ENCODE measurements at regions of chr2 and their contacts with region 1.

Region 1: DNA sequence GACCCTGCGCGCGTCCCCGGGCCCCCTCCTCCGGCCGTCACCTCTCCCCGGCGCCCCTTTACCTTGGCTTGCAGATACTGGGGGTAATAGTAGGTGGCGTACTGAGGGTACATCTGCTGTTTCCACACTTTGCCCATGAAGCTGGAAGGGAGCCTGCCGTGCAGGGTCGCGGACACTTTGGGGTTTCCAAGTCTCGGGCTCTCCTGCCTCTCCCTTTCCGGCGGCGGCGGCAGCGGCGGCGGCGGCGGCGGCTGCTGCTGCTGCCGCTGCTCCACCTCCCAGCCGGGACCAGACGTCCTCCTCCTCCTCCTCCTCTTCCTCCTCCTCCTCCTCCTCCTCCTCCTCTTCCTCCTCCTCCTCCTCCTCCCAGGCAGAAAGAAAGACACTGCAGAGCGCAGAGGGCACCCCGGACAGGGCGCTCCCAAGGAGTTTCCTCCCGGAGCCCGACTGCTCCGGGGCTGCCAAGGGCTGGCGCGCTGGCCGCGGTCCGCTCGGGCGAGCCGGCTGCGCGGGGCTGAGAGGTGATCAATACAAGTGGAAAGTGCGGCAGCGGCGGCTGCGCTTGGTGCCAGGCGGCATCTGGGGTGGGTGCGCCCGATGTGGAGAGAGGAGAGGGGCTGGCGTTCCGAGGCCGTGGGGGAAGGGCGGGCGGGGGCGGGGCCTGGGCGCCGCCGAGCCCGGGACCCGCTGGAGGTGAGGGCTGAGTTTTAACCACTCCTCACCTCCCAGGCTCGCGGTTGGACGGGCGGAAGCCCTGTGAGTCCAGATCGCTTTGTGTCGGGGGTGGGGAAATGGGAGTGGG is at the start of gene RBMS1:
- DNase-seq: peak; percentile 57 to 68
- H3K4me3 ChIP-seq: peak within 1 kb of the TSS; percentile 94
- H3K4me3 Mint-ChIP-seq: peak within 1 kb of the TSS; percentile 91
- H3K27ac Mint-ChIP-seq: peak within 1 kb of the TSS; percentile 64
- H3K4me1 ChIP-seq: peaks cover 12% of the 10 kb centered on the region
- H3K4me1 Mint-ChIP-seq: peaks cover 10% of the 10 kb centered on the region
- H3K27me3 ChIP-seq: no peaks in the 10 kb centered on the region
- H3K27me3 Mint-ChIP-seq: peaks cover 3% of the 10 kb centered on the region
- CTCF ChIP-seq: no peak
- total RNA-seq, gene RBMS1: 91.9 and 92.2 TPM in 2 replicates

Region 2: DNA sequence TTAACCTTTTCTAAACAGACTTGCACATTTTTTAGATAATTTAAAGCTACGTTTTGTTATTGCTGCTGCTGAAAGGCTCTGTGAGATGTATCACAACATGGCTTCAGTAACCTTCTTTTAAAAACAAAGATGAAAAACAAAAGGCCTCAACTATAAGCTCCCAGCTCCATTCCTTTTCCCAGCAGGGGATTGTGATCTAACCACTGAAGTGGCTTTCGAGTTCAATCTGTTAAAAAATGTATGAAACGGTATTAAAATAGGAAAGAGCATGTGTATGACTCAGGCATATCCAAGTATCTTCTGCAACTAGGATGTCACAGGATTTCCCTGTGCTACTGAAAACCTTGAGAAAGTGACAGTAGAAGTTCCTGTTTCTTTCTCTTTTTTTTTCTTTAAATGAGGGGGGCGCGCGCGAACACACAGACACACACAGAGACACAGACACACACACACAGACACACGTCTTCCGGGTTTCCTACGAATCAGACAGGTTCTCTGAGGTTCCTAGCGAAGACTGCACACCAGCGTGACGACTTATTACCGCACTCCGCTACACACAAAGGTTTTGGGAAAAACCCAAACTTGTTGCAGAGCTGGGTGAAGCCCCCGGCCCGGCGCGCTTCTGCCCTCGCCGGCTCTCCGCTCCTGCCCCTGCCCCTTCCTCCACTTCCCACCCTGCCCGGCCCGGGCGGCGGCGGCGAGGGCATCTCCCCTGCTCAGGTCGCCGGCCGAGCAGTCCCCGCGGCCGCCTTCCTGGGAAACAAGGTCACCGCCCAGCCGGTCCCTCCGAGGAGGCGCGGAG is 86.6 kb before region 1 on chr2:
- CTCF ChIA-PET with region 1: no interaction called
- POLR2A ChIA-PET with region 1: no interaction called
- intact Hi-C with region 1: loop called (anchors 1 kb)
- DNase-seq: peak; percentile 57
- H3K4me3 ChIP-seq: peak overlapping the region; percentile 90
- H3K4me3 Mint-ChIP-seq: peak overlapping the region; percentile 75
- H3K27ac Mint-ChIP-seq: peak overlapping the region; percentile 95
- H3K4me1 ChIP-seq: peaks cover 38% of the 10 kb centered on the region
- H3K4me1 Mint-ChIP-seq: peaks cover 48% of the 10 kb centered on the region
- H3K27me3 ChIP-seq: no peaks in the 10 kb centered on the region
- H3K27me3 Mint-ChIP-seq: no peaks in the 10 kb centered on the region
- CTCF ChIP-seq: no peak

Region 3: GRCh38 chr2:160429248-160430000 is 64.0 kb before region 1 on chr2:
- CTCF ChIA-PET with region 1: no interaction called
- POLR2A ChIA-PET with region 1: no interaction called
- intact Hi-C with region 1: loop called (anchors 2 kb)
- DNase-seq: peak in 1 of 2 experiments; percentile 18
- H3K4me3 ChIP-seq: no peak overlapping the region
- H3K4me3 Mint-ChIP-seq: no peak overlapping the region
- H3K27ac Mint-ChIP-seq: no peak overlapping the region
- H3K4me1 ChIP-seq: peaks cover 16% of the 10 kb centered on the region
- H3K4me1 Mint-ChIP-seq: peaks cover 17% of the 10 kb centered on the region
- H3K27me3 ChIP-seq: no peaks in the 10 kb centered on the region
- H3K27me3 Mint-ChIP-seq: no peaks in the 10 kb centered on the region
- CTCF ChIP-seq: peak; percentile 43 to 48

Region 4: GRCh38 chr2:160582490-160583145 is 89.2 kb after region 1 on chr2:
- CTCF ChIA-PET with region 1: interaction called, 6 read pairs
- POLR2A ChIA-PET with region 1: no interaction called
- intact Hi-C with region 1: loop called (anchors 2 kb)
- DNase-seq: peak in 1 of 2 experiments; percentile 18
- H3K4me3 ChIP-seq: no peak overlapping the region
- H3K4me3 Mint-ChIP-seq: no peak overlapping the region
- H3K27ac Mint-ChIP-seq: peak overlapping the region; percentile 83
- H3K4me1 ChIP-seq: peaks cover 14% of the 10 kb centered on the region
- H3K4me1 Mint-ChIP-seq: peaks cover 7% of the 10 kb centered on the region
- H3K27me3 ChIP-seq: no peaks in the 10 kb centered on the region
- H3K27me3 Mint-ChIP-seq: no peaks in the 10 kb centered on the region
- CTCF ChIP-seq: no peak

Region 5: GRCh38 chr2:160730296-160730995 is 237.0 kb after region 1 on chr2:
- CTCF ChIA-PET with region 1: no interaction called
- POLR2A ChIA-PET with region 1: no interaction called
- intact Hi-C with region 1: loop called (anchors 2 kb)
- DNase-seq: peak; percentile 75
- H3K4me3 ChIP-seq: no peak overlapping the region
- H3K4me3 Mint-ChIP-seq: peak overlapping the region; percentile 46
- H3K27ac Mint-ChIP-seq: peak overlapping the region; percentile 71
- H3K4me1 ChIP-seq: peaks cover 32% of the 10 kb centered on the region
- H3K4me1 Mint-ChIP-seq: peaks cover 40% of the 10 kb centered on the region
- H3K27me3 ChIP-seq: no peaks in the 10 kb centered on the region
- H3K27me3 Mint-ChIP-seq: no peaks in the 10 kb centered on the region
- CTCF ChIP-seq: no peak

Region 6: GRCh38 chr2:160918906-160919503 is 425.6 kb after region 1 on chr2:
- CTCF ChIA-PET with region 1: no interaction called
- POLR2A ChIA-PET with region 1: no interaction called
- intact Hi-C with region 1: loop called (anchors 1 kb)
- DNase-seq: peak; percentile 52 to 57
- H3K4me3 ChIP-seq: no peak overlapping the region
- H3K4me3 Mint-ChIP-seq: no peak overlapping the region
- H3K27ac Mint-ChIP-seq: no peak overlapping the region
- H3K4me1 ChIP-seq: no peaks in the 10 kb centered on the region
- H3K4me1 Mint-ChIP-seq: no peaks in the 10 kb centered on the region
- H3K27me3 ChIP-seq: no peaks in the 10 kb centered on the region
- H3K27me3 Mint-ChIP-seq: no peaks in the 10 kb centered on the region
- CTCF ChIP-seq: peak; percentile 57 to 64